Colonic mucosa (tissue), 4 donors: ENCODE measurements at regions of chr10 and their contacts with region 1.

Region 1: GRCh38 chr10:22228943-22229801 is 11.4 kb upstream of the EBLN1 start:
- DNase-seq: peak; percentile 91
- H3K4me3 ChIP-seq: peak overlapping the region; percentile 69
- H3K27ac ChIP-seq: peak overlapping the region; percentile 83
- H3K4me1 ChIP-seq: no peaks in the 10 kb centered on the region
- H3K27me3 ChIP-seq: no peaks in the 10 kb centered on the region
- CTCF ChIP-seq: no peak

Region 2: GRCh38 chr10:21488246-21488956 is 740.8 kb before region 1 on chr10:
- intact Hi-C with region 1: no loop called
- DNase-seq: no peak
- H3K4me3 ChIP-seq: no peak overlapping the region
- H3K27ac ChIP-seq: no peak overlapping the region
- H3K4me1 ChIP-seq: no peaks in the 10 kb centered on the region
- H3K27me3 ChIP-seq: no peaks in the 10 kb centered on the region
- CTCF ChIP-seq: no peak

Region 3: DNA sequence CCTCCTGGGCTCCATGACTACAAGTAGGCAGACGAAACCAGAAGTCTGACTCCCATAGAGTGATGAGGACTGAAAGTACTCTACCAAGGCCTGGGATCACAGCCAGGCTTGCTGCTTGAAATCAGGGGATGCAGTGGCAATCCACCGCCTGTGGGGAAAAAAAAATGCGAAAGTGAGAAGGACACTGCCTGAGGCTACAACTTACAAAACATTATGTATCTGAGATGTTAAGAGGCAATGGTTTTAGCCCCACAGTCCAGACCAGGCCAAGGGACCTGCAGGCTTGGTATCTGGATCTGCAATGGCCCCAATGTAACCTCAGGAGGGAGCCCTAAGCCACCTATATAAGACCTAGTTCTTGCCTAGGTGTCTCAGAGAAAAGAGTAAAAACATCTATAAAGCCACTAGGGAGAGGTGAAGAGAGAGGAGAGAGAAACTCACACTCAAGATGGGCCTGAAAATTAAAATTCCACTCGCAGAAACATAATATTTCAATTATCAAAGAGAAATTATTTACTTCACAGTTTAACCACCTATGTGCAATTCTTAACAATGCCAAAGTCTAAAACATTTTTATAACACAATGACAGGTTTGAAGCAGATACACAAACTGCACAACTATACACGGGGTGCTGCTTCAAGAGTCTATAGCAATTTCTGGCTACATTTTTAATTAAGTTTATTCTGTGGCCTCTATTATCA is 239.6 kb before region 1 on chr10:
- intact Hi-C with region 1: loop called (anchors 10 kb)
- DNase-seq: peak; percentile 26
- H3K4me3 ChIP-seq: no peak overlapping the region
- H3K27ac ChIP-seq: no peak overlapping the region
- H3K4me1 ChIP-seq: no peaks in the 10 kb centered on the region
- H3K27me3 ChIP-seq: no peaks in the 10 kb centered on the region
- CTCF ChIP-seq: peak; percentile 25

Region 4: GRCh38 chr10:22316285-22317120 is 87.3 kb after region 1 on chr10 and contains the start of gene COMMD3:
- intact Hi-C with region 1: loop called (anchors 2 kb)
- DNase-seq: peak; percentile 88
- H3K4me3 ChIP-seq: peak within 1 kb of the TSS; percentile 73
- H3K27ac ChIP-seq: peak within 1 kb of the TSS; percentile 90
- H3K4me1 ChIP-seq: no peaks in the 10 kb centered on the region
- H3K27me3 ChIP-seq: no peaks in the 10 kb centered on the region
- CTCF ChIP-seq: no peak
- total RNA-seq, gene COMMD3: 41.3 to 45.7 TPM

Region 5: DNA sequence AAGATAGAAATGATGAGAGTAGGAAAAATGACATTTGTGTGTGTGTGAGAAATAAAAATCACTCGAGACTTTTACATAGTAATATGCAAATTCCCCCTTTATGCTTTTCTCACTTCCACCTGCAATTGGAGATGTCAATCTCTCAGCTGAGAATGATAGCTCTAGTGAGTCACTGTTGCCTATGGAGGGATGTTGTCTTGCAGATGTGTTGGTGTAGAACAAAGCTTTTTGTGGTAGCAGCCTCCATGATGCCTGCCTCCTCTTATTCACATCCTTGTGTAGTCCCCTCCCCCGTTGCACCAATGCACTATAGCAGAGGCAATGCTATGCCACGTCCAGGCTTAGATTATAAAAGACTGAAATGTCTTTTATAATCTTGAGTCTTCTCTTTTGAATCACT is 149.9 kb after region 1 on chr10:
- intact Hi-C with region 1: no loop called
- DNase-seq: no peak
- H3K4me3 ChIP-seq: no peak overlapping the region
- H3K27ac ChIP-seq: no peak overlapping the region
- H3K4me1 ChIP-seq: no peaks in the 10 kb centered on the region
- H3K27me3 ChIP-seq: no peaks in the 10 kb centered on the region
- CTCF ChIP-seq: no peak